PC-3 (cell line): ENCODE measurements at regions of chr12 and their contacts with region 1.

Region 1: DNA sequence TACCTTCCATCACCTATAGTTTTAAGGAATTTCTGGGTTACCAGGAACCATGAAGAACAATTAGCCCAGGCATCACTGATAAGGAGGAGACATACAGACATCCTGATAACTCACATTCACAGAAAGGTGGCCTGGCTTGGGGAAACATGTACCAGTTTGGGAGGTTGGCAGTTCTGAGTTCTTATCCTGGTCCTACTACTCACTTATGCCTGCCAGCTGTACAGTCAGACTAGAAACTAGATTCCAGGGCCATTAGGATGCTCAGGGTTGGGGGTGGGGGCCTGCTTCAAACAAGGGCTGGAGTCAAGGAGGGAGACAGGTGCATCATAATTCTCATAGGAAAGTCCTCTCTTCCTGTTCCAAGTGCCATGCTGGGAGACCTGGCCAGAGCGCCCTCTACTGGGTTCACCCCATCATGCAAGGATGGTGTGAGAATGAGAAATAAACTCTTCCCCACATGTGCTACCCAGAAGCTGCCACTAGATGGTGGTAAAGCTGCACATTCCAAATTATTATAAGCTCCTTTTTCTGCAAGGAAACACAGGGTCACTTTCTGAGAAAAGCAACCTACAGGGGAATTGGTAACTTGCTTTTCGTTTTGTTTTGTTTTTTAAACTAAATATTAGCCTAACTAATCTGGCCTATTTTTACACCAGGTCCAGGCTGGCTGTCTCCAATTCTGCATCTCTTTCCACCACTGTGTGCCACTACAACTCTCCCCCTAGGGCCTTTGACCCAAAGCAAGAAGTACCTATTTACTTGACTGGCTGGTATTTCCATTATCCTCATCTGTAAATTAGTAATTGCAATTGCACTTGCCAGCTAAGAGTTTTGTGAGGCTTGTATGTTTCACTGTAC is 14.5 kb downstream of the OAS2 start:
- DNase-seq: peak; percentile 87
- ATAC-seq: peak; percentile 80
- H3K4me3 ChIP-seq: no peak overlapping the region
- H3K27ac ChIP-seq: no peak overlapping the region
- H3K4me1 ChIP-seq: no peaks in the 10 kb centered on the region
- H3K27me3 ChIP-seq: no peaks in the 10 kb centered on the region
- CTCF ChIP-seq: peak; percentile 100

Region 2: DNA sequence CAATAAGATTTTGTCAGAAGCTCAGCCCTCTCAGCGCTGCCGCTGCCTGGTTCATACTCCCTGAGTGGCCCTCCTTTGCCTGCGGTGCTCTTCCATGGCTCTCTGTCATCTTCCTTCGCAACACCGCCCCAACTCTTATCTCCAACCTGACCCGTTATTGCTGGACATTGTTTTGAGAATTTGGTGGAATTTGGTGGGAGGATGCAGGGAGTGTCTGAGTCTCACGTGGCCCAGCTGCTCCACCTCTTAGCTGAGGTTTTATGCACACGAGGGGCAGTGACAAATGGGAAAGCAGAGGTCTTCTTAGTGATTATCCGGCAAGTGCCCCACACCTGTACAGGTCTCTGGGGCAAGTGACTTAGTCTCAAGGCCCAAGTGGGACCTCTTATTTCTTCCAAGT is 298.7 kb before region 1 on chr12:
- CTCF ChIA-PET with region 1: no interaction called
- POLR2A ChIA-PET with region 1: no interaction called
- intact Hi-C with region 1: no loop called
- DNase-seq: no peak
- ATAC-seq: no peak
- H3K4me3 ChIP-seq: no peak overlapping the region
- H3K27ac ChIP-seq: no peak overlapping the region
- H3K4me1 ChIP-seq: no peaks in the 10 kb centered on the region
- H3K27me3 ChIP-seq: peaks cover 43% of the 10 kb centered on the region
- CTCF ChIP-seq: no peak

Region 3: DNA sequence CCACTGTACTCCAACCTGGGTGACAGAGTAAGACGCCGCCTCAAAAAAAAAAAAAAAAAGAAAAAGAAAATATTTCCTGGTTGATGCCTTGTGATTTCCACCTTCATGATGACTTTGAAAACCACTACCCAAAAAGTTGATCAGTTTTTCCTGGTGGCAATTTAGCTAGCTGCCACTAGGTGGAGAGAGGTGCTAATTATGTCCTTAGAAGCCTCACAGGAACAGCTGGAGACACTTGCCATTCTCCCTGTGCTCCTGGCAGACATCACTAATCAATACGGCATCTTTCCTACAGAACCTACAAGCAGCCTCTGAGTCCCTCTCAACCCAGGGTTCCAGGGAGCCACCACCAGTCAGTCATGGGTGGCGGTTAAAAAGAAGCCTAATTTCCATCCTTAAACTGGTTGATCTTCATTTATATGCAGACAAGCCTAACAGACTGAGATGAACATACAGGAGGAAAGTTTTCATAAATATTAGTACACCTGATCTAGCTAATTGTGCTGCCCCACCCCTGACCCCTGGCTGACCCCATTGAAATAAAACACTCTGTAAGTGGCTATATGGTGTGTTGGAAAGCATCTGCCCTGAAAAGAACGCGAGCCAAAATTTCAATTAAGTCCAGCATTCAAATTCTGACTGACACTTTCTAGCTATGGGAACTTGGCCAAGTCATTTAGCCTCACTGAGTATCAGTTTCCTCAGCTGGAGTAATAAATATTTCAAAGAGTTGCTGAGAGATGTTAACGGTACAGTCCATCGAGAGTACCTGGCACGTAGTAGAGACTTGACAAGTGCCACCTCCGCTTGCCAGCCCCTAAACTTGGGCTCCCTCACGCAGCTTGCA is 92.2 kb before region 1 on chr12:
- CTCF ChIA-PET with region 1: interaction called, 24 read pairs
- POLR2A ChIA-PET with region 1: no interaction called
- intact Hi-C with region 1: no loop called
- DNase-seq: peak; percentile 74
- ATAC-seq: peak; percentile 31
- H3K4me3 ChIP-seq: no peak overlapping the region
- H3K27ac ChIP-seq: no peak overlapping the region
- H3K4me1 ChIP-seq: peaks cover 27% of the 10 kb centered on the region
- H3K27me3 ChIP-seq: peaks cover 35% of the 10 kb centered on the region
- CTCF ChIP-seq: peak; percentile 83

Region 4: DNA sequence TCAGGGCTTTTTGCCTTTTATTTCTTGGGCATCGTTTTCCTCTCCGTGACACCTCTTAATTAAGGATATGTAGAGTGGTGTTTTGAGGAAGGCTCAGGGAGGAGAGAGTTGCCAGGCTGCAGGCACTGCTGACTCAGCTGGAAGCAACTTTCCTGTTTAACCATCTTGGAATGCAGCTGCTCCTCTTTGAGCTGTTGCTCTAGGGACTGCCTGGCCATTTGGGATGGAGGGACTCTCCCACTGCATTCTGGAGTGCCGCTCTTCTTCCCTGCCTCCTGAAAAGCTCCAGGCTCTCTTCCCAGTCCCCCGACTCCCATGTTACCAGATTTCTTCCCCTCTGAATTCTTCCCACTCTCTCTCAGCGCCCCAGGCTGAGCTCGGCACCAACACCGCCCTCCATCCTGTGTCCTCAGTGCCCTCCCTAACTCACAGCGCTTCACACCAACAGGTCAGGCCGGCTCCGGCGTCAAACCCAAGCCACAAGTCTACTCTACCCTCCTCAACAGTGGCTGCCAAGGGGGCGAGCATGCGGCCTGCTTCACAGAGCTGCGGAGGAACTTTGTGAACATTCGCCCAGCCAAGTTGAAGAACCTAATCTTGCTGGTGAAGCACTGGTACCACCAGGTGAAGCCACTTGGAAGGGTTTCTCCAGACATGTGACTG is 48.6 kb before region 1 on chr12:
- CTCF ChIA-PET with region 1: no interaction called
- POLR2A ChIA-PET with region 1: no interaction called
- intact Hi-C with region 1: no loop called
- DNase-seq: no peak
- ATAC-seq: no peak
- H3K4me3 ChIP-seq: no peak overlapping the region
- H3K27ac ChIP-seq: no peak overlapping the region
- H3K4me1 ChIP-seq: peaks cover 9% of the 10 kb centered on the region
- H3K27me3 ChIP-seq: no peaks in the 10 kb centered on the region
- CTCF ChIP-seq: no peak

Region 5: GRCh38 chr12:112978163-112979040 is 14.4 kb before region 1 on chr12 and contains the start of gene OAS2:
- CTCF ChIA-PET with region 1: interaction called, 19 read pairs
- POLR2A ChIA-PET with region 1: interaction called, 5 read pairs
- intact Hi-C with region 1: loop called (anchors 2 kb)
- DNase-seq: peak; percentile 78
- ATAC-seq: peak; percentile 95
- H3K4me3 ChIP-seq: peak within 1 kb of the TSS; percentile 64
- H3K27ac ChIP-seq: peak within 1 kb of the TSS; percentile 11; the same call in 1 of the 2 replicates
- H3K4me1 ChIP-seq: peaks cover 14% of the 10 kb centered on the region
- H3K27me3 ChIP-seq: no peaks in the 10 kb centered on the region
- CTCF ChIP-seq: no peak
- total RNA-seq, gene OAS2: 5.8 and 10.5 TPM in 2 replicates

Region 6: DNA sequence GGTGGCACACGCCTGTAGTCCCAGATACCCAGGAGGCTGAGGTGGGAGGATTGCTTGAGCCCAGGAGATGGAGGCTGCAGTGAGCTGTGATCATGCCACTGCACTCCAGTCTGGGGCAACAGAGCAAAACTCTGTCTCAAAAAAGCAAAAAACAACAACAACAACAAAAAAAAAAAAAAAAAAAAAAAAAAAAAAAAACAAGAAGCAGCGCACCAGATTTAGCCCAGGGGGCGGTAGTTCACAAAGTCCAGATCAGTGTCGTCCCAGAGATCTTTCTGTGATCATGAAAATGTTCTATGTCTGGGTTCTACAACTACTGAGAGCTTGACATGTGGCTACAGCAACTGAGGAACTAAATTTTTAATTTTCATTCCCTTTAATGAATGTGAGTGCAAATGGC is 13.0 kb after region 1 on chr12:
- CTCF ChIA-PET with region 1: interaction called, 18 read pairs
- POLR2A ChIA-PET with region 1: no interaction called
- intact Hi-C with region 1: no loop called
- DNase-seq: peak; percentile 45
- ATAC-seq: no peak; the same call in 1 of the 2 replicates
- H3K4me3 ChIP-seq: no peak overlapping the region
- H3K27ac ChIP-seq: no peak overlapping the region
- H3K4me1 ChIP-seq: 0 out of 2 replicates have a peak, but pooled peaks cover 7% of the 10 kb centered on the region
- H3K27me3 ChIP-seq: no peaks in the 10 kb centered on the region
- CTCF ChIP-seq: peak; percentile 66

Region 7: DNA sequence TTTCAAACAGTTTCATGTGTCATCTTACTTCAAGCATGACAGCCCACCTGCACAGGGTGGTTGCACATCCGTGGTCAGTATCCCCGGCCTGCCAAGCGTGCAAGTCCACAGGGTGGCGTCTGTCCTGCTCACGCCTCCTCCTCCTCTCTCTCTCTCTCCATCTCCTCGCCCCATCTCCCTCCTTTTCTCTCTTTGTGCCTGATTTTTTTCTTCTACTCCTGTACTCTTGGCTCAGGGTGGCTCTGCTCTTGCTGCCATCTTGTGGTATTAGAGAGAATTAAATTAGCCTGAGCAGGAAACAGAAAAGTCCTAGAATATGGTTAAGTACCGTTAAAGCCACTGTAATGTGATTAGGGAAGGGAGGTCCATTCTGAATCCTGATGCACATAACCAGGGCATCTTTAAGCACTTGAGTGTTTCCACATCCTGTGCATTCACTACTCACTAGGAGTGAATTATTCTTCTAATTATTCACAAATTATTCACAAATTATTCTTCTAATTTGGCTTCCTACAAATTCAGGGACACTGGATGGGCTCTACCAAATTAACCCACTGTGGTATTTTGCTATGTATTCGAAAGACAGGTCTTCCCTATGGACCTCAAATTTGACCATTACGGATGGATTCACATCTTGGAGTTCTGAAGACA is 38.2 kb after region 1 on chr12:
- CTCF ChIA-PET with region 1: interaction called, 12 read pairs
- POLR2A ChIA-PET with region 1: no interaction called
- intact Hi-C with region 1: loop called (anchors 1 kb)
- DNase-seq: peak; percentile 86
- ATAC-seq: peak; percentile 98
- H3K4me3 ChIP-seq: no peak overlapping the region
- H3K27ac ChIP-seq: no peak overlapping the region
- H3K4me1 ChIP-seq: no peaks in the 10 kb centered on the region
- H3K27me3 ChIP-seq: no peaks in the 10 kb centered on the region
- CTCF ChIP-seq: peak; percentile 93

Region 8: GRCh38 chr12:113048716-113049127 is 56.0 kb after region 1 on chr12:
- CTCF ChIA-PET with region 1: interaction called, 4 read pairs
- POLR2A ChIA-PET with region 1: interaction called, 22 read pairs
- intact Hi-C with region 1: no loop called
- DNase-seq: peak; percentile 84
- ATAC-seq: peak; percentile 86
- H3K4me3 ChIP-seq: no peak overlapping the region
- H3K27ac ChIP-seq: no peak overlapping the region
- H3K4me1 ChIP-seq: no peaks in the 10 kb centered on the region
- H3K27me3 ChIP-seq: peaks cover 32% of the 10 kb centered on the region
- CTCF ChIP-seq: peak; percentile 93

Region 9: GRCh38 chr12:113152835-113153814 is 160.4 kb after region 1 on chr12:
- CTCF ChIA-PET with region 1: interaction called, 23 read pairs
- POLR2A ChIA-PET with region 1: no interaction called
- intact Hi-C with region 1: no loop called
- DNase-seq: peak; percentile 88
- ATAC-seq: peak; percentile 93
- H3K4me3 ChIP-seq: peak overlapping the region; percentile 68
- H3K27ac ChIP-seq: no peak overlapping the region
- H3K4me1 ChIP-seq: peaks cover 7% of the 10 kb centered on the region; the same call in 1 of the 2 replicates
- H3K27me3 ChIP-seq: no peaks in the 10 kb centered on the region
- CTCF ChIP-seq: peak; percentile 76